MCF 10A (cell line): ENCODE measurements at regions of chr10 and their contacts with region 1.

Region 1: DNA sequence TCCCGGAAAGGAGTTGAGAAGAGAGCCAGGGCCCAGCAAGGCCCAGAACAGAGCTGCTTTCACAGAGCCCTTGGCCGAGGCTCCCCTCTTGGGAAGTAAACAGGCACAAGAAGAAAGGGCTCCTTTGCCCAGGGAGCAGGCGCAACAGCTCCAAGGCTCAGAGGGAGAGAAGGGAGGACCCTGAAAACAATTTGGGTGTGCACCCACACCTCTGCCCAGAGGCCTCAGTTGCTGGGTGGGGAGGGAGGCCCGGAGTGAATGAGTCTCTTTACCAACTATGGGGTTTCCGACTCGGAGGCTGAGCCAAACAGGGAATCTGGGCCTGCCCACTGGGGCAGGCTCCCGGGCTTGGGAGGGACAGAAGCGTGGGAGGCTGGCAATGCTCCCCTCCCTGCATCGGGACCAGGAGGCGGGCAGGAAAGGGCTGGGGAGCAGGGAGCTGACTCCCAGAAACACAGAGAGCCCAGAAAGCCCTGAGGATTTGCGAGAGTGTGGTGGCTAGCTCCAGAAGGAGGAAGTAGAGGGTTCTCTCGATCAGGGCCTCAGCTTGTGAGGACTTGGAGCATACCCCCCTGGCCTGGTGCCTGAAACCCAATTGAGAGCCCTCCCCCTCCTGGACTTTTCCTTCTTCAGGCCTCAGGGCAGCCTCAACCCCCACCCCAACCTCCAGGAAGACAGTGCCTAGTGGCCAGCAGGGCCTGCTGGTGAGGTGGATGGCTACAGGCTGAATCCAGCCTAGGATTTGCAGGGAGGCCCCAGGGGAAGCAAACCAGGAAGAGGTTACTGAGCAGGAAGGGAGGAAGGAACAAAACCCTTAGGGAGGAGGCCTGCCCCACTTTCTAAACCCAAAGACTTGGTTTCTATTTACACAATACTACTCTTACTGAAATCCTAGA is 6.2 kb downstream of the C10orf105 start:
- DNase-seq: peak; percentile 97
- H3K4me3 Mint-ChIP-seq: peak overlapping the region; percentile 41
- H3K27ac Mint-ChIP-seq: peak overlapping the region; percentile 93
- H3K4me1 Mint-ChIP-seq: peaks cover 23% of the 10 kb centered on the region
- H3K27me3 Mint-ChIP-seq: no peaks in the 10 kb centered on the region
- CTCF ChIP-seq: no peak

Region 2: GRCh38 chr10:70729763-70730352 is 983.5 kb before region 1 on chr10:
- CTCF ChIA-PET with region 1: no interaction called
- POLR2A ChIA-PET with region 1: no interaction called
- intact Hi-C with region 1: no loop called
- DNase-seq: no peak
- H3K4me3 Mint-ChIP-seq: no peak overlapping the region
- H3K27ac Mint-ChIP-seq: no peak overlapping the region
- H3K4me1 Mint-ChIP-seq: no peaks in the 10 kb centered on the region
- H3K27me3 Mint-ChIP-seq: no peaks in the 10 kb centered on the region
- CTCF ChIP-seq: no peak

Region 3: DNA sequence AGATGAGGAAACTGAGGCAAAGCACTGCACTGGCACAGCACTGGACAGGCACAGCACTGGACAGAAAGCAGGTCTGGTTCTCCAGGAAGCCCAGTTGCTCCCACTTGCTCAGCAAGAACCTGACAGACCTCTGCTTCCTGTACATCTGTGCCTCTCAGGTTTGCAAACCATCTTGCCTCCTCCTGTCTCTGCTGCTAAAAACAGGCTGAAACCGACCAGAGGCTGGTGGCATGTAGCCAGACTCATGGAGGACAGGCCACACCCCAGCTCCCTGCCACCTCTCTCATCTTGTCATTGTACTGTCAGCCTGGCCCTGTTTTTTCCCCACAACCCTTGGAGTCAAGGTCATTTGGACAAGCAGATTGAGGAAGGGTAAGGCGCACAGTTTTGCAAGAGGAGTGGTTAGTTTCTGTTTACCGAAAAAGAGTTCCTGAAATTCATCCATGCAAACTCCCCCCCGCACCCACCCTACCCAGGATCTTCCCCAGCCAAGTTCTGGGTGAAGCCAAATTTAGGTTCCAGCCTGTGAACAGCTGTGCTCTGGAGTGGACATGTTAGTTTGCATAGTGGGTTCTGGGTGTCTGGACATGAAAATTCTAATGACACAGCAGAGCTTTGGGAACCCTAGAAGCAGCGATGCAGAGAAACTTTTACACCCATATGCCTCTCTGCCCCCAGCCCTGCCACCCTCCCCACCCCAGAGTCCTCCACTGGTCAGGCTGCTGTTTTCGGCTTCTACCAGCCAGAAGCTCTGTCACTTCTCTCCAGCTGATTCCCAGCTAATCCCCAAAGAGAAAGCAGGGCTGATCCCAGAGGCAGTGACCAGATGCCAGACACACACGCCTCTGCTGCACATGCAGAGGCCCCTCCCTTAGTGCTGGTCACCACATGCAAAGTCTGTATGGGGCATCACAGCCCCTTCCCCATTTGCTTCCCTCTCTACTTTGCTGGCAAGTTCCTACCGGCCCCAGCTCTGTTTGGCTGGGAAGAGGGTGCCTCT is 14.7 kb after region 1 on chr10:
- CTCF ChIA-PET with region 1: interaction called, 3 read pairs
- POLR2A ChIA-PET with region 1: interaction called, 19 read pairs
- intact Hi-C with region 1: no loop called
- DNase-seq: peak; percentile 70
- H3K4me3 Mint-ChIP-seq: no peak overlapping the region
- H3K27ac Mint-ChIP-seq: peak overlapping the region; percentile 42
- H3K4me1 Mint-ChIP-seq: peaks cover 18% of the 10 kb centered on the region
- H3K27me3 Mint-ChIP-seq: no peaks in the 10 kb centered on the region
- CTCF ChIP-seq: no peak

Region 4: DNA sequence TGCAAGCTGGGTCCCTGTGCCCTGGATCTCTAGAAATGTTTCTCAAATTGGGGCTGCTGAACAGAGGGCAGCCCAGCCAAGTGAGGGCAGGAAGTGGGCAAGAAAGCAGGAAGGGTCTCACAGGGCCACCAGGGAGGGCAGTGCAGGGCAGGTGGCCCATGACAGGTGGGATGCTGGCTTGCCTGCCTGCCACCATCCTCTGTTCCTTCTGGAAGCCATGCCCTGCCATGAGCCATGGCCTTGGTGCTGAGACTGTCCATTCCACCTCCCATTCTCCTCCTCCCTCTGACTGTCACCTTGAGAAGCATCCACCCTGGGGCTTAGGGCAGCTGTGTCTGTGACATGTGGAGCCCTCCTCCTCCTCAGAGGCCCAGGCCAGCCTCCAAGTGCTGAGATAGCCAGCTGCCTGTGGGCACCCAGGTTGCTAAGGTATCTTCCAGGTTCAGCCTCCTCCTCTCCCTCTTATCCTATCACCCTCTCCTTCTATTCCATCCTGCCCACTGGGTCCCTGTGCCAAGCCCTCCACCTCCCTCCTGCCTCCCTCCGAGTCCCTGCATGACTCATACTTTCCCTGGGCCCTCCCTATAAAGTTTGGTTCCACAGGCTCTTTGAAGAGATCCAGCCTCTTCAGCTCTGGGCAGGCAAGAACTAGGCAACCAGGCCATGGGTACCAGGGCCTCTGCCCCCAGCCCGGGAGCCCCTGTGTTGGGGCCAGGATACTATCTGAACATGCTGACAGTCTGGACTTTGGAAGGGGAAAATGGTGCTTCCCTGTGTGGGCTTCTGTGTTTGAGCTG is 58.6 kb after region 1 on chr10:
- CTCF ChIA-PET with region 1: interaction called, 8 read pairs
- POLR2A ChIA-PET with region 1: interaction called, 6 read pairs
- intact Hi-C with region 1: loop called (anchors 5 kb)
- DNase-seq: peak; percentile 83
- H3K4me3 Mint-ChIP-seq: no peak overlapping the region
- H3K27ac Mint-ChIP-seq: no peak overlapping the region
- H3K4me1 Mint-ChIP-seq: peaks cover 26% of the 10 kb centered on the region
- H3K27me3 Mint-ChIP-seq: no peaks in the 10 kb centered on the region
- CTCF ChIP-seq: no peak

Region 5: GRCh38 chr10:71812016-71812912 is 98.9 kb after region 1 on chr10:
- CTCF ChIA-PET with region 1: interaction called, 4 read pairs
- POLR2A ChIA-PET with region 1: interaction called, 3 read pairs
- intact Hi-C with region 1: loop called (anchors 5 kb)
- DNase-seq: peak; percentile 62
- H3K4me3 Mint-ChIP-seq: no peak overlapping the region
- H3K27ac Mint-ChIP-seq: no peak overlapping the region
- H3K4me1 Mint-ChIP-seq: no peaks in the 10 kb centered on the region
- H3K27me3 Mint-ChIP-seq: no peaks in the 10 kb centered on the region
- CTCF ChIP-seq: peak; percentile 91